ENCODE measurements at regions of chr13 and their contacts with region 1.

Region 1: DNA sequence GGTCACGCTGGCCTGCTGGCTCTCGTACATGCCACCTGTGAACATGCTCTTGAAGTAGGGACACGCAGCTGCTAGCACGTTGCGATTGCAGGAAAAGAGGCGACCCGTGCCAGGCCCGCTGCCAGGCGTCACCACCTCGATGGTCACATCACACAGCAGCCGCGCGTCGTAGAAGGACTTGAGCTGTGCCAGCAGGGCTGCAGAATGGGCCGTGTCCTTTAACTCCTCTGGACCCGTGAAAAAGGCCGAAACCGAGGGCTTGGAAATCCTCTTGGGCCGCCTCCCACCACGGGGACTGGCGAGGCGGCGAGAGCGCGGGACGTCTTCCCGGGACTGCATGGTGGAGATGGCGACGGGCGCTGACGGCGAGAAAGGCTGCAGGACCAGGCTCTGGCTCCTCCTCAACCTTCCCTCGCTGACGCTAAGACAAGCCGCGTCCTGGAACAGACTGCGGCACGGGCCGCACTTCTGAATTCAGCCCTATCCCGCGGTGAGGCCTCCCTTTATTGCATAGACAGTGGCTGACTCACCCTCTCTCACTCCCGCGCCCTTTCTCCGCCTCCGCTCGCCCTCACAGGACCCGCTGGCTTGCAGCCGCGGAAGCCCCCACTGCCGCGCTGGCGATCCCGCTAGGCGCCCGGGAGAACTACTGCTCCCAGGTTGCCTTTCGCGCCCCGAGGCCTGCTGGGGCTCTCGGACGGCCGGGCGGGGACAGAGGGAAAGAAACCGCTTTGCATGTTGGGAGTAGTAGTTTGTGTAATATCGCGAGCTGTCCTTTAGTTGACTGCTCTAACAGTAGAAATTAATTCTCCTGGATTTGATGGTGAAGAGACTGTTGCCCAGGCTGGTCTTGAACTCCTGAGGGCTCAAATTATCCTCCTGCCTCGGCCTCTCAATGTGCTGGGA is at the start of gene KBTBD7:
- DNase-seq: peak; percentile 92 to 96 (median 95)
- H3K4me3 ChIP-seq: peak within 1 kb of the TSS in 2 of 4 donors; percentile 57 to 91
- H3K27ac ChIP-seq: peak within 1 kb of the TSS in 4 of 5 donors; percentile 16 to 88 (median 84)
- H3K4me1 ChIP-seq: peaks cover 5 to 13% of the 10 kb centered on the region in 2 donors
- H3K27me3 ChIP-seq: no peaks in the 10 kb centered on the region
- CTCF ChIP-seq: no peak
- POLR2A ChIP-seq: peak; percentile 51 to 84
- total RNA-seq, gene KBTBD7: 6.9 to 13.7 (median 9.9) TPM

Region 2: GRCh38 chr13:41004875-41005693 is 189.1 kb before region 1 on chr13:
- intact Hi-C with region 1: no loop called
- DNase-seq: no peak
- H3K4me3 ChIP-seq: no peak overlapping the region
- H3K27ac ChIP-seq: no peak overlapping the region
- H3K4me1 ChIP-seq: peaks cover 0 to 37% of the 10 kb centered on the region in 2 donors
- H3K27me3 ChIP-seq: no peaks in the 10 kb centered on the region
- CTCF ChIP-seq: no peak
- POLR2A ChIP-seq: no peak

Region 3: DNA sequence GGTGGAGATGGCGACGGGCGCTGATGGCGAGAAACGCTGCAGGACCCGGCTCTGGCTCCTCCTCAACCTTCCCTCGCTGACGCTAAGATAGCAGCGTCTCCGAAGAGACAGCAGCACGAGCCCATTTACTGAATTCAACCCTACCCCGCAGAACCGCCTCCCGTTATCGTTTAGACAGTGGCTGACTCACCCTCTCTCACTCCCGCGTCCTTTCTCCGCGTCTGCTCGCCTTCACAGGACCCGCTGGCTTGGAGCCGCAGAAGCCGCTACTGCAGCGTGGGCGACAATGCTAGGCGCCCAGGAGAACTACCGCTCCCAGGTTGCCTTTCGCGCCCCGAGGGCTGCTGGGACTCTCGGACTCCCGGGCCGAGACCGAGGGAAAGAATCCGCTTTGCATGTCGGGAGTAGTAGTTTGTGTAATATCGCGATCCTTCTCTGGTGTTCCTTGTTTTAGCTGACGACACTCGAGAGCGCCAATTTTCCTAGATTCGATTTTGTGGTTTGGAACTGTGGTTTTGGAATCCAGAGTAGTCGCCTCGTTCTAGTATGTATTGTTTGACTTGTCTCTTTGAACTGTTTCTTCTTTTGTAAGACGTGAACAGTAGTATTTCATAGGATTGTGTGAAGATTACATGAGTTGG is 61.5 kb before region 1 on chr13 and contains the start of gene KBTBD6:
- intact Hi-C with region 1: loop called (anchors 5 to 10 kb)
- DNase-seq: peak; percentile 96 to 98 (median 98)
- H3K4me3 ChIP-seq: peak within 1 kb of the TSS in 3 of 4 donors; percentile 50 to 82 (median 73)
- H3K27ac ChIP-seq: peak within 1 kb of the TSS; percentile 45 to 92 (median 74)
- H3K4me1 ChIP-seq: peaks cover 21 to 36% of the 10 kb centered on the region in 2 donors
- H3K27me3 ChIP-seq: no peaks in the 10 kb centered on the region
- CTCF ChIP-seq: no peak
- POLR2A ChIP-seq: peak; percentile 35 to 84
- total RNA-seq, gene KBTBD6: 8.8 to 15.9 (median 13.0) TPM